Endothelial cell of umbilical vein (primary cell): ENCODE measurements at regions of chr22 and their contacts with region 1.

Region 1: GRCh38 chr22:37807410-37808293 is at the start of gene GCAT:
- DNase-seq: peak; percentile 98
- H3K4me3 ChIP-seq: peak within 1 kb of the TSS; percentile 64 to 79 (median 66)
- H3K27ac ChIP-seq: peak within 1 kb of the TSS; percentile 30
- H3K4me1 ChIP-seq: peaks cover 31% of the 10 kb centered on the region
- H3K27me3 ChIP-seq: no peaks in the 10 kb centered on the region
- CTCF ChIP-seq: no peak
- POLR2A ChIP-seq: peak; percentile 80
- total RNA-seq, gene GCAT: 19.7 and 19.9 TPM in 2 replicates

Region 2: GRCh38 chr22:37745548-37746365 is 61.9 kb before region 1 on chr22:
- CTCF ChIA-PET with region 1: no interaction called
- POLR2A ChIA-PET with region 1: interaction called, 3 read pairs
- dilution Hi-C with region 1: no loop called
- intact Hi-C with region 1: loop called (anchors 1 kb)
- DNase-seq: peak; percentile 88
- H3K4me3 ChIP-seq: peak overlapping the region; percentile 63 to 82 (median 75)
- H3K27ac ChIP-seq: peak overlapping the region; percentile 89
- H3K4me1 ChIP-seq: peaks cover 47% of the 10 kb centered on the region
- H3K27me3 ChIP-seq: no peaks in the 10 kb centered on the region
- CTCF ChIP-seq: no peak
- POLR2A ChIP-seq: peak; percentile 39

Region 3: DNA sequence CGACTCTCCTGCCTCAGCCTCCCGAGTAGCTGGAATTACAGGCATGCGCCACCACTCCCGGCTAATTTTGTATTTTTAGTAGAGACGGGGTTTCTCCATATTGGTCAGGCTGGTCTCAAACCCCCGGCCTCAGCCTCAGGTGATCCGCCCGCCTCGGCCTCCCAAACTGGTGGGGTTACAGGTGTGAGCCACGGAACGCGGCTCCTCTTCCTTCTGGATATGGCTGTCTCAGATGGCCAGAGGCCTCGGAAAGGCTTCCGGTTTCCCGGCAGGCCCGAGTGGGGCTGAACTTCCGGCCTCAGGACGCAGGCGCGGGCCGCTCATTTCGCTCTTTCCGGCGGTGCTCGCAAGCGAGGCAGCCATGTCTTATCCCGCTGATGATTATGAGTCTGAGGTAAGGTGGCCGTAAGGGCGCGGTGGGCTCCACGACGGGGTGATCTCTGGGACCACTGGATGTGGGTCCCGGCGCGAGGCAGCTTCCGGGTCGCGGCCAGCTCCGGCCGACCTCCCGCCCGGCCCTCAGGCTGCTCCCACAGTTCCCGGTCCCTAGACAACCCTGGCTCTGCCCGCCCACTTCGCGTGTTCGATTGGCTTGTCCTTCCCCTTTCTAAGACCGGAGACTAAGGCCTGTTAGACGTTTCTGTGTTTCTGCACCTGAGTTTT is 41.6 kb after region 1 on chr22 and contains the start of gene EIF3L:
- CTCF ChIA-PET with region 1: no interaction called
- POLR2A ChIA-PET with region 1: interaction called, 4 read pairs
- dilution Hi-C with region 1: no loop called
- intact Hi-C with region 1: loop called (anchors 2 kb)
- DNase-seq: peak; percentile 94
- H3K4me3 ChIP-seq: peak within 1 kb of the TSS; percentile 86 to 97 (median 95)
- H3K27ac ChIP-seq: peak within 1 kb of the TSS; percentile 79
- H3K4me1 ChIP-seq: peaks cover 17% of the 10 kb centered on the region
- H3K27me3 ChIP-seq: no peaks in the 10 kb centered on the region
- CTCF ChIP-seq: no peak
- POLR2A ChIP-seq: peak; percentile 94
- total RNA-seq, gene EIF3L: 442 and 479 TPM in 2 replicates

Region 4: GRCh38 chr22:37905534-37906363 is 98.1 kb after region 1 on chr22 and contains the start of gene MICALL1:
- CTCF ChIA-PET with region 1: no interaction called
- POLR2A ChIA-PET with region 1: no interaction called
- dilution Hi-C with region 1: no loop called
- intact Hi-C with region 1: no loop called
- DNase-seq: peak; percentile 69
- H3K4me3 ChIP-seq: peak within 1 kb of the TSS; percentile 55 to 76 (median 67)
- H3K27ac ChIP-seq: peak within 1 kb of the TSS; percentile 94
- H3K4me1 ChIP-seq: peaks cover 20% of the 10 kb centered on the region
- H3K27me3 ChIP-seq: no peaks in the 10 kb centered on the region
- CTCF ChIP-seq: no peak
- POLR2A ChIP-seq: peak; percentile 73
- total RNA-seq, gene MICALL1: 65.2 and 66.9 TPM in 2 replicates